ENCODE measurements at regions of chr10 and their contacts with region 1.

Region 1: DNA sequence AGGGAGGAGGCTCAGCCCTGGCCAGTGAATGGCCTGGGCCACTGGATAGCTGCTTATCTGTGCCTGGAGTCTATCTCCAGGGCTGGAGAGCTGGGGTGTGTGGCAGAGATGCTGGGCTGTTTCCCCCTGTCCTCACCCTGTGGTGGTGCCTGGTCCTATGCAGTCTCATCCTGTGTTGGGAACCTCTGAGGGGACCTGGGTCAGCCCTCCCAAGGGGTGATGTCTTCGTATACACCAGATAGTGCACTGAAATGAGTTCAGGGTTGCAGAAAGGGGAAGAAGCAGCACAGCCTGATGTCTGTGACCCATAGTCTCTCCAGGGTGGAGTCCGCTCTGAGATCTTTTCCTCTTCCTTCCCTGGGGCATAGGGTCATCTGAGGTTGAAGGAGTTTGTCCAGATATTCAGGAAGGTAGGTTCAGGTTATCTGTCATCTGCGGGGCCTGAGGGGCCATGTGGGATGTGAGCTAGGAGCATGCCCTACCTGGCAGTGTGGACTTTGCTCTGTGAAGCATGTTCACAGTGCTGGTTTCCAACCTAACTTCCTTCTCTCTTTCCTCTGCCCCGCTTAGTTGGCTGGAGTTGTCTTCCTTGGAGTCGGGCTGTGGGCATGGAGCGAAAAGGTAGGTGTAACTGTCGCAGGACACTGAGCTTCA is 33.4 kb upstream of the SH2D4B start:
- DNase-seq: no peak
- ATAC-seq: no peak
- H3K4me3 Mint-ChIP-seq: no peak overlapping the region
- H3K27ac Mint-ChIP-seq: peak overlapping the region; percentile 87
- H3K4me1 Mint-ChIP-seq: peaks cover 73% of the 10 kb centered on the region
- H3K27me3 Mint-ChIP-seq: no peaks in the 10 kb centered on the region

Region 2: GRCh38 chr10:80408242-80409101 is 95.8 kb before region 1 on chr10 and contains the start of gene PRXL2A:
- CTCF ChIA-PET with region 1: interaction called, 15 read pairs
- POLR2A ChIA-PET with region 1: no interaction called
- DNase-seq: peak; percentile 88
- ATAC-seq: peak; percentile 97
- H3K4me3 Mint-ChIP-seq: peak within 1 kb of the TSS; percentile 72
- H3K27ac Mint-ChIP-seq: peak within 1 kb of the TSS; percentile 65
- H3K4me1 Mint-ChIP-seq: peaks cover 26% of the 10 kb centered on the region
- H3K27me3 Mint-ChIP-seq: peaks cover 10% of the 10 kb centered on the region
- total RNA-seq, gene PRXL2A: 14.9 to 15.3 TPM

Region 3: GRCh38 chr10:80437231-80437630 is 67.1 kb before region 1 on chr10:
- CTCF ChIA-PET with region 1: interaction called, 1,113 read pairs
- POLR2A ChIA-PET with region 1: no interaction called
- DNase-seq: no peak
- ATAC-seq: no peak
- H3K4me3 Mint-ChIP-seq: no peak overlapping the region
- H3K27ac Mint-ChIP-seq: no peak overlapping the region
- H3K4me1 Mint-ChIP-seq: no peaks in the 10 kb centered on the region
- H3K27me3 Mint-ChIP-seq: peaks cover 11% of the 10 kb centered on the region

Region 4: GRCh38 chr10:80464557-80465450 is 39.5 kb before region 1 on chr10:
- CTCF ChIA-PET with region 1: interaction called, 1,113 read pairs
- POLR2A ChIA-PET with region 1: interaction called, 10 read pairs
- DNase-seq: no peak
- ATAC-seq: peak; percentile 16
- H3K4me3 Mint-ChIP-seq: peak overlapping the region; percentile 68
- H3K27ac Mint-ChIP-seq: peak overlapping the region; percentile 90
- H3K4me1 Mint-ChIP-seq: peaks cover 98% of the 10 kb centered on the region
- H3K27me3 Mint-ChIP-seq: no peaks in the 10 kb centered on the region

Region 5: DNA sequence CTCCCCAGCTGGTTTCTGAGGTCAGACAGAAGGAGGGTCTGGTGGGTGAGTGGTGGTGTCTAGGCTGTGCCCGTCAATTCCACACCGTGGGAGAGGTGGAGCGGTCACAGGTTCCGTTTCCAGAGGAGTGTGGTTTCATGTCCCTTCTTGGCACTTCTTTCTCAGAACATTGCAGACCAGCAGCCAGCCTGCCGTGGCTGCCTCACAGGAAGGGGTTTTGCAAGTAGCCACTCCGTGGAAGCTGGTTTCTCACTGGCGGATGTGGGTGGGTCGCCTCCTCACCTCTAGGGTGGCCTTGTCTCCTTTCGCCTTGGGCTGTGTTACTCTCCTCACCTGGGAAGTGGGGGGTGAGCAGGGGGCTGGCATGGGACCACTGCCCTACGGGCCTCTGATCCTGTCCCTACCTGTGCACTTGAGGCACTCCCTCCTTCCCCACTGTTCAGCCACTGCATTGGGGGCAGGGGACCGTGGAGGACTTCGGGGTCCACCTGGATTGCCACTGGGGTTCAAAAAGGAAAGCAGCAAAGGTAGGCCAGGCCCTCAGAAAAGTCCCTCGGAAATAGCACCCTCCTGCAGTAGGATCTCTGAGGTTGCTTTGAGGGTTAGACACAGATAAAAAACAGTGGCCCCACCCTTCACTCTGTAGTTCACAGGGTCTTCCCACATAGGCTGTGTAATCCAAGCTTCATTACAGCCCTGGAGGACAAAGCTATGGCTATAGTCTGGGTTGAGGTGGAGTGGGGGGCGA is 16.3 kb before region 1 on chr10:
- CTCF ChIA-PET with region 1: interaction called, 46 read pairs
- POLR2A ChIA-PET with region 1: interaction called, 52 read pairs
- DNase-seq: peak; percentile 88
- ATAC-seq: peak; percentile 74
- H3K4me3 Mint-ChIP-seq: peak overlapping the region; percentile 74
- H3K27ac Mint-ChIP-seq: peak overlapping the region; percentile 94
- H3K4me1 Mint-ChIP-seq: peaks cover 97% of the 10 kb centered on the region
- H3K27me3 Mint-ChIP-seq: no peaks in the 10 kb centered on the region

Region 6: GRCh38 chr10:80530251-80530650 is 26.0 kb after region 1 on chr10:
- CTCF ChIA-PET with region 1: interaction called, 29 read pairs
- POLR2A ChIA-PET with region 1: no interaction called
- DNase-seq: peak; percentile 69
- ATAC-seq: peak; percentile 61
- H3K4me3 Mint-ChIP-seq: peak overlapping the region; percentile 61
- H3K27ac Mint-ChIP-seq: peak overlapping the region; percentile 97
- H3K4me1 Mint-ChIP-seq: peaks cover 76% of the 10 kb centered on the region
- H3K27me3 Mint-ChIP-seq: no peaks in the 10 kb centered on the region

Region 7: DNA sequence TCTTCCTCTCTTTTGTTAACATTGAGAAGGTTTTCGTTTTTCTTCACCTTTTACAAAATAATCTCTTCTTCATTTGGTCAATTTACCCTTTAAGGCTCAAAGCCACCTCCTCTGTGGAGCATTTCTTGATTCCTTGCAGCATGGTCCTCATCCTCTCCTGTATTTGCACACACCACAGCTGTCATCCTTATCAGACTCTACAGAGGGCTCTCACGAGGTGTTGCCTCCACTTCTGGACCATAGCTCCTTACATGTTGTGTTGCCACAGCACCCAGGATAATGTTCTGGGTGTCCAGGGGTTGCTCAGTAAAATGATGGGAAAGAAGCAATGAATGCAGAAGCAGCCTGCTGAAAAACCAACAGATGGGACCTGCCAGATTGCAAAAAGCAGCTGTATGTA is 226.2 kb after region 1 on chr10:
- CTCF ChIA-PET with region 1: no interaction called
- POLR2A ChIA-PET with region 1: no interaction called
- DNase-seq: no peak
- ATAC-seq: no peak
- H3K4me3 Mint-ChIP-seq: no peak overlapping the region
- H3K27ac Mint-ChIP-seq: no peak overlapping the region
- H3K4me1 Mint-ChIP-seq: no peaks in the 10 kb centered on the region
- H3K27me3 Mint-ChIP-seq: no peaks in the 10 kb centered on the region